ENCODE measurements at regions of chr1 and their contacts with region 1.

Region 1: DNA sequence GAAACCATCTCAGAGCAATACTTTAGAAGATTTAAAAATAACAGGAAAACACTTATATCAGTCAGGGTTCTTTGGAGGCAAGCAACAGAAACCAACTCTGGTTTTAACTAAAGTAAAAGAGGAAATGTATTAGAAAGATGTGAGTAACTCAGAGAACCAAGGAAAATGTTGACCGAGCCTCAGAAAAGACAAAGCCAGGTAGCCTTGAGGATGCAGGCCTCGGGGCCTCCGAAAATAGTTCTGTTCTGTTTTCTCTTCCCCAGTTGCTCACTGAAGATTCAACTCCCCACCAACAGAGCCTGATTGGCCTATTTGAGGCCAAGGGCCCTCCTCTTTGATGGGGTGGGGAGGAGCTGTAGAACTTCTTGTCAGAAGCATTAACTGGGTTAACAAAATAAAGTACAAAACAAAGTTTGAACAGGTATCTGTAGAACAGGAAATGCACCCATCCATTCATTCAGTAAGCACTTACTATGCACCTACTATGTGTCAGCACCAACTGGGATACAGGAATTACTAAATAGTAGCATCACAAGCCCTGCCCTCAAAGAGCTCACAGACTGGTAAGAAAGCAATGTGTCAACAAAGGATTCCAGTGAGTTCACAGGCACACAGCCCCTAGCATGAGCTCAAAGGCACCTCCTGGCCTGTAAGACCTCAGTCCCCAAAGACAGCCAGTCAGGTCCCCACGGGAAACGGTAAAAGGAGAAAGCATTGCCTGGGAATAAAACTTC is 12.6 kb downstream of the SLAMF8 start:
- DNase-seq: no peak
- H3K4me3 ChIP-seq: no peak overlapping the region
- H3K27ac ChIP-seq: no peak overlapping the region
- H3K4me1 ChIP-seq: no peaks in the 10 kb centered on the region
- H3K27me3 ChIP-seq: peaks cover 0 to 2% (median 0%) of the 10 kb centered on the region in 4 experiments; a peak in 2 of 7 replicates
- CTCF ChIP-seq: no peak
- EP300 ChIP-seq: no peak
- POLR2A ChIP-seq: no peak
- RAD21 ChIP-seq: no peak

Region 2: DNA sequence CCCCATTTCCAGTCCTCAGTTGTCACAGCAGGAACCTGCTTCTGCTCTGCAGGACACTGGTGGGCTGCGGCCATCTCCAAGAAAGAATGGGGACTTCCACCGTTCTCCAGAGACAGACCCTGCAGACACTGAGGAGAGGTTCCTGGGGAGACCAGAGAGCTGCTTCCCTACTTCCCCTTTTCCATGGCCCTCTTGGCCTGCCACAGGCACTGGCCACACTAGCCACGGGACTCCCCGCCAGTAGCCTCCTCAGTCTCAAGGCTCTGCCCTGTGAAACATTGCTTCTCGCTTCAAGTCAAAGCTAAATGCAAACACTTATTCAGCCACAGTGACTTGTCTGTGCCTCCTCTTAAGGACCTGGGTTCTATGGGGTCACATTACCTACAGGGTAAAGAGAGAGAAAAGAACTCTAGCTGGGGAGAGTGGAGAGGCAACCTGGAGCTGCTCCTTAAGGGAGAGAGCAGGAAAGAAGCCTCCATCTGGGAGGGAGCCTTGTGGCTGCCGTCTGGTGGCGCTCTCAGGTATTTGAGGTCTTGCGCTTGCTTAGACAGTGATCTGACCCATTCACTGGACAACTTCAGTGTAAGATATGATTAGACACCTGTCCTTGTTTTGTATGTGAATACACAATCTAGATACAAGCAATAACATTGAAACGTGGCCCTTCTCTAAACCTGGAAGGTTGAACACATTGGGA is 18.0 kb before region 1 on chr1:
- CTCF ChIA-PET with region 1: interaction called, 11 read pairs
- POLR2A ChIA-PET with region 1: no interaction called
- DNase-seq: no peak
- H3K4me3 ChIP-seq: no peak overlapping the region
- H3K27ac ChIP-seq: no peak overlapping the region
- H3K4me1 ChIP-seq: 0 out of 7 replicates have a peak, but pooled peaks cover 0 to 3% (median 0%) of the 10 kb centered on the region in 4 experiments
- H3K27me3 ChIP-seq: no peaks in the 10 kb centered on the region
- CTCF ChIP-seq: peak in 2 of 3 experiments; percentile 34 to 48; a peak in 3 of 4 replicates
- EP300 ChIP-seq: no peak
- POLR2A ChIP-seq: no peak
- RAD21 ChIP-seq: peak in 1 of 2 experiments; percentile 15; a peak in 2 of 4 replicates

Region 3: GRCh38 chr1:159829273-159829634 is 10.0 kb before region 1 on chr1:
- CTCF ChIA-PET with region 1: interaction called, 30 read pairs
- POLR2A ChIA-PET with region 1: interaction called, 5 read pairs
- DNase-seq: peak in 1 of 2 experiments; percentile 67
- H3K4me3 ChIP-seq: no peak overlapping the region
- H3K27ac ChIP-seq: no peak overlapping the region
- H3K4me1 ChIP-seq: peaks cover 0 to 4% (median 2%) of the 10 kb centered on the region in 4 experiments; a peak in 1 of 7 replicates
- H3K27me3 ChIP-seq: peaks cover 0 to 15% (median 3%) of the 10 kb centered on the region in 4 experiments; a peak in 6 of 7 replicates
- CTCF ChIP-seq: peak; percentile 73 to 78 (median 78)
- EP300 ChIP-seq: no peak
- POLR2A ChIP-seq: no peak
- RAD21 ChIP-seq: peak; percentile 43 to 59

Measured in H1 (cell line).